ENCODE measurements at regions of chr1 and their contacts with region 1.

Region 1: GRCh38 chr1:21270086-21270689 is 20.1 kb downstream of the ECE1 start:
- DNase-seq: peak; percentile 64 to 77 (median 71)
- H3K4me3 ChIP-seq: no peak overlapping the region
- H3K27ac ChIP-seq: no peak overlapping the region
- H3K4me1 ChIP-seq: no peaks in the 10 kb centered on the region
- H3K27me3 ChIP-seq: no peaks in the 10 kb centered on the region

Region 2: DNA sequence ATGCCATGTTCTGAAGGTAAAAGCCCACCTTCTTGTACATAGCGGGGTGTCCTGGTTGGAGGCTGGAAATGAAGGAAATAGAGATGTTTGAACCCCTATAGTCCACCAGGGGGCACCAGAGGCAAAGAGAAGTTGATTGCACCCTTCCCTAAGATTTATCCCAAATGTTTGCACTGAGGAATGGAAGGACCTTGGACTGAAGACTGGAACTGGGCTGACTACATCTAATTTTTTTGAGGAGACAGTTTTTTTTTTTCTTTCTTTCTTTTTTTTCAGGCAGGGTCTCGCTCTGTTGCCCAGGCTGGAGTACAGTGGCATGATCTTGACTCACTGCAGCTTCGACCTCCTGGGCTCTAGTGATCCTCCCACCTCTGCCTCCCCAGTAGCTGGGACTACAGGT is 38.1 kb before region 1 on chr1:
- CTCF ChIA-PET with region 1: interaction called, 14 read pairs
- POLR2A ChIA-PET with region 1: no interaction called
- DNase-seq: peak; percentile 36 to 60 (median 50)
- H3K4me3 ChIP-seq: no peak overlapping the region
- H3K27ac ChIP-seq: no peak overlapping the region
- H3K4me1 ChIP-seq: peaks cover 0 to 6% (median 3%) of the 10 kb centered on the region in 4 experiments
- H3K27me3 ChIP-seq: no peaks in the 10 kb centered on the region

Region 3: DNA sequence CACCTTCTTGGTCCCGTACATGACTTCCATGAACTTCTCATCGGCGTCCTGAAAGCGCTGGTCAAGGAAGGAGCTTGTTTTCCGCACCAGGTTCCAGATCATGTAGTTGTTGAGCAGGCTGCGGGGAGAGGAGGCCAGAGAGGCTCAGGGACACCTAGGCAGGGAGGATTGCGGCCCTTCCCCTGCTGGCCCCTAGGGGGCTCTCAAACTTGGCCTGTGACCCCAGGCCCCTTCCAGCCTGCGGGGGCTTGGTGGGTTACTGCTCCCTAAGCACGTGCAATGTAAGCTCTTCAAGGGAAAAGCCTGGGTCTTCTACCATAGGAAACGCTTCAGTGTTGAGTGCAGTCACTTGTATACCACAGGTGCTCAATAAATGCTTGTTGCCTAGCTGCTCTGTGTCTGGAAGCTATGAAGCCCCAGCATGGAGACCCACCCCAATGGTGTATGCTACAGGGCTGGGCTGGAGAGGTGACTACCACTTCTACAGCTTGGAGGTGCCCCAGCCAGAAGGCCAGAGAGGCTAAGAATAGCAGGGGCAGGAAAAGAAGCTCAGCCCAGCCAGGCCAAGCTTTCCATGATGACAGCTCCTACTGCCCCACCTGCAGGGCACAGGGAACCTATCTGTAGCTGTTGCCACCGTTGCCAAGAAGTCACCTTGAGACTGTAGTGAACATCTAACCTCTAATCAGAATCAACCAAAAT is 25.1 kb before region 1 on chr1:
- CTCF ChIA-PET with region 1: interaction called, 14 read pairs
- POLR2A ChIA-PET with region 1: no interaction called
- DNase-seq: no peak
- H3K4me3 ChIP-seq: no peak overlapping the region
- H3K27ac ChIP-seq: no peak overlapping the region
- H3K4me1 ChIP-seq: no peaks in the 10 kb centered on the region
- H3K27me3 ChIP-seq: no peaks in the 10 kb centered on the region

Region 4: GRCh38 chr1:21287905-21288514 is 17.8 kb after region 1 on chr1:
- CTCF ChIA-PET with region 1: interaction called, 18 read pairs
- POLR2A ChIA-PET with region 1: no interaction called
- DNase-seq: peak in 2 of 3 donors; percentile 49 to 59
- H3K4me3 ChIP-seq: no peak overlapping the region
- H3K27ac ChIP-seq: no peak overlapping the region
- H3K4me1 ChIP-seq: peaks cover 6 to 31% (median 25%) of the 10 kb centered on the region in 4 experiments
- H3K27me3 ChIP-seq: peaks cover 0 to 18% (median 5%) of the 10 kb centered on the region in 5 experiments

Region 5: DNA sequence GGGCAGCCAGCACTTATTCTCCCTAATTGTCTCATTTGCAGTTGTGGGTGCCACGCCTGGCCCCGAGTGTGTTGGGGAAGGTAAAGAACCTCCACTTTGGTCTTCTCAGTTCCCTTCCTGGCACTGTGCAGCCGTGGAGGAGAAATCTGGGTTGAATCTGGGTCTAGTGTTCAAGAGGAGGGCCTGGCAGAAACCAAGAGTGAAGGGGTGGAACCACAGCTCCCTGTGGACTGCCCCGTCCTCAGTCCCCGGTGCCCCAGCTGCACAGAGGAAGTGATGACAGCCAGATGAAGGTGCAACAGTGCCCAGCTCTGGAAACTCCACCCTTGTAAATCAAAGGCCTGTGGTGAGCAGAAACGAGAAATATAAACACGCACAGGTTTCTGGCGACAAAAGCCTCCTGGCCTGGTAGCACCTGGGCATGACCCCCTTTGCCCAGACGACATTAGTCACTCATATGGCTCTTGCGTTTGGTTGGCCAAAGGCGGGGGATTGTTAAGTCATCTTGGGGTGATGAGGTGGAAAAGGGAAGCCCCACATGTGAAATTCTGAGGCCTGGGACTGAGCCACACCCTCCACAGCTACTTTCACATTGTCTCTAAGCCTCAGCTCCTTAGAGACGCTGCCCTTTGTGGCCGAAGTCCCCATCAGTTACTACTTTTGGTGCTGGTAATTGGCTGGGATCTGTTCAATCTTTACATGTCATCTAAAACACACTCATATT is 24.2 kb after region 1 on chr1:
- CTCF ChIA-PET with region 1: interaction called, 18 read pairs
- POLR2A ChIA-PET with region 1: no interaction called
- DNase-seq: peak; percentile 74 to 96 (median 95)
- H3K4me3 ChIP-seq: peak overlapping the region in 1 of 7 experiments; percentile 14
- H3K27ac ChIP-seq: peak overlapping the region in 1 of 2 experiments; percentile 43
- H3K4me1 ChIP-seq: peaks cover 16 to 43% (median 36%) of the 10 kb centered on the region in 4 experiments
- H3K27me3 ChIP-seq: peaks cover 0 to 10% (median 0%) of the 10 kb centered on the region in 5 experiments

Region 6: GRCh38 chr1:21302747-21303715 is 32.8 kb after region 1 on chr1:
- CTCF ChIA-PET with region 1: interaction called, 11 read pairs
- POLR2A ChIA-PET with region 1: no interaction called
- DNase-seq: peak in 2 of 3 donors; percentile 33 to 40
- H3K4me3 ChIP-seq: no peak overlapping the region
- H3K27ac ChIP-seq: no peak overlapping the region
- H3K4me1 ChIP-seq: peaks cover 3 to 10% (median 8%) of the 10 kb centered on the region in 4 experiments
- H3K27me3 ChIP-seq: no peaks in the 10 kb centered on the region

Region 7: DNA sequence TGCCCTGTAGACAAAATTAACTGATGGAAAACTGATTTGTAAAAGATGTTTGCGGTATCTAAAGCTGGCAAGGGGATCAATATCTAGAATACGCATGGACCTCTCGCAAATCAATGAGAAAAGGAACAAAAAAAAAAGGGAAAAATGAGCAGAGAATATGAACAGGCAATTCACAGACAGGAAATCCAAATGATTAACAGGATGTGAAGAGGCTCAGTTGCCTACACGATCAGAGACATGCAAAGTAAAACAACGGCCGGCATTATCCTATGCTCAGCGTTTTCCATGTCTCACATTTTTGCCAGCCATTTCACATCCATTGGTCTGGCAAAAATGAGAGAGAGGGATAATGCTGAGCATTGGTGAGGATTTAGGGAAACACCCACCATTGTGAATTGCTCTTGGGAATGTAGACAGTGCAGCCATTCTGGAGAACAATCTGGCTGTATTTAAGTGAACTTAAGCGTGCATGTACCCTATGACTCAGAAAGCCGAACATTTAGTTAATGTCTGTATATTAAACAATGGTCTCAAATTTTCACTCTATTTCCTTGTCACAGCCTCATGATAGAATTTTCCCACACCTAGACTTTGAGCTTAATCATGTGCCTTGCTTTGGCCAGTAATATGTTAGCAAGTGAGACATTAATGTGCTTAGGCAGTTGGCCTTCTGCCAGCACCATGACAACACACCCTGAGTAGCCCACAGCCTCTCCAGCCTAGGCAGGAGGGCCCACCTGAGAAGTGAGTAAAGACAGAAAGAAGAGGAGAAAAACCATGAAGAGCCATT is 108.7 kb after region 1 on chr1:
- CTCF ChIA-PET with region 1: no interaction called
- POLR2A ChIA-PET with region 1: no interaction called
- DNase-seq: peak in 1 of 3 donors; percentile 13
- H3K4me3 ChIP-seq: no peak overlapping the region
- H3K27ac ChIP-seq: no peak overlapping the region
- H3K4me1 ChIP-seq: no peaks in the 10 kb centered on the region
- H3K27me3 ChIP-seq: peaks cover 0 to 9% (median 4%) of the 10 kb centered on the region in 5 experiments

Region 8: DNA sequence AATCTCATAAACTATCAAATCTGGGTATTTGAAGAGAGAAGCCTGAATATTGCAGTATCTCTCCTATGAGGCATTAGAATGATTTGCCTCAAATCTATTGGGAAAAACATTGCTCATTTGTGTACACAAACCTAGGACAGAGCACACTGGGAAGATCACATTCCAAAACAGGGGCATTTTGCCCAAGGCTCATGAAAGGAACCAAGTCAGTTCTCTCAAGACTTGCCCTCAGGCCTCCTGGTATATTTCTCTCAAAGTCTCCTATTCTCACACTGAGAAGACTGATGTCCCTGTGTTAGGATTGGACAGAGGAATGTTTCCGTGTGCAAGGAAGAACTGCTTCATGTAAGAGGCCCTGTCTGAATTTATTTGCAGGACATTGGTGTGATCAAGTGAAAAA is 208.8 kb after region 1 on chr1:
- CTCF ChIA-PET with region 1: no interaction called
- POLR2A ChIA-PET with region 1: no interaction called
- DNase-seq: no peak
- H3K4me3 ChIP-seq: no peak overlapping the region
- H3K27ac ChIP-seq: no peak overlapping the region
- H3K4me1 ChIP-seq: no peaks in the 10 kb centered on the region
- H3K27me3 ChIP-seq: no peaks in the 10 kb centered on the region

Region 9: DNA sequence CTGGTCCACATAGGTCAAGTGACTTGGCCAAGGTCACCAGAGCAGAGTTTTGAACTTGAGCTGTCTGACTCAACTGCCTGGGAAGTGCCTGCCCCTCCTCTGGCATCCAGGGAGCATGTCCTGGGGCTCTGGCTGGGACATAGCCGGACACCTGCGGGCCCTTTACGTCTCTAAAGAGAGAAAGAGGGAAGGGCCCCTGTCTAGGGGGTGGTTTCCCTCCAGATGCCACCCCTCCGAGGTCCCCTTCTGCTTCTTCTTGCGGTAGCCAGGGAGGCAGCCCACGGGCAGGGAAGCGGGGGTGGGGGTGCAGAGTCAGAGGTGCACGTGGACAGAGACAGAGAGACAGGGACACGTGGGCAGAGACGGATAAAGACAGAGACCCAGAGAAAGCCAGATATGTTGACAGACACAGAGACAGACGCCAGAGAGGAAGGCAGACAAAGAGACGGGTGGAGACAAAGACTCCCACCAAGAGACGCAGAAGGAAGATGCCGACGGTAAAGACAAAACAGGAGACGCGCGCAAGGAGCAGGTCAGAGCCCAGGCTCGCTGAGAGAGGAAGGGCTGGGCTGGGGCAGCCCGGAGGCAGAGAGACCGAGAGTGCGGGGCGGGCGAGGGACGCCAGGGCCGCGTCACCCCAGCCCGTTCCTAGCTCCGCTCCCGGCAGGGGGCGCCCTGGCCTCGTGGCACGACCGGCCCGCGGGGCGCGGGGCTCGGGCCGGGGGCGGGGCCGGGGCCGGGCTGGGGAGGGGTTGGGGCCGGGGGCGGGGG is 238.6 kb after region 1 on chr1:
- CTCF ChIA-PET with region 1: no interaction called
- POLR2A ChIA-PET with region 1: no interaction called
- DNase-seq: peak; percentile 55 to 76 (median 70)
- H3K4me3 ChIP-seq: peak overlapping the region in 5 of 7 experiments; percentile 10 to 57 (median 35)
- H3K27ac ChIP-seq: no peak overlapping the region
- H3K4me1 ChIP-seq: peaks cover 0 to 14% (median 9%) of the 10 kb centered on the region in 4 experiments
- H3K27me3 ChIP-seq: peaks cover 0 to 67% (median 28%) of the 10 kb centered on the region in 5 experiments

Measured in common myeloid progenitor, CD34-positive (primary cell).